K562 (cell line): ENCODE measurements at regions of chr11 and their contacts with region 1.

Region 1: GRCh38 chr11:35617687-35618496 is at the start of gene FJX1:
- DNase-seq: peak; percentile 63 to 81 (median 78)
- ATAC-seq: peak; percentile 71
- H3K4me3 ChIP-seq: peak within 1 kb of the TSS; percentile 35
- H3K27ac ChIP-seq: no peak within 1 kb of the TSS
- H3K4me1 ChIP-seq: peaks cover 0 to 24% of the 10 kb centered on the region in 2 experiments; a peak in 4 of 5 replicates
- H3K27me3 ChIP-seq: peaks cover 21 to 30% of the 10 kb centered on the region in 2 experiments
- CTCF ChIP-seq: no peak
- EP300 ChIP-seq: no peak
- POLR2A ChIP-seq: no peak
- RAD21 ChIP-seq: no peak
- polyA plus RNA-seq, gene FJX1: 0.10 to 0.38 TPM

Region 2: DNA sequence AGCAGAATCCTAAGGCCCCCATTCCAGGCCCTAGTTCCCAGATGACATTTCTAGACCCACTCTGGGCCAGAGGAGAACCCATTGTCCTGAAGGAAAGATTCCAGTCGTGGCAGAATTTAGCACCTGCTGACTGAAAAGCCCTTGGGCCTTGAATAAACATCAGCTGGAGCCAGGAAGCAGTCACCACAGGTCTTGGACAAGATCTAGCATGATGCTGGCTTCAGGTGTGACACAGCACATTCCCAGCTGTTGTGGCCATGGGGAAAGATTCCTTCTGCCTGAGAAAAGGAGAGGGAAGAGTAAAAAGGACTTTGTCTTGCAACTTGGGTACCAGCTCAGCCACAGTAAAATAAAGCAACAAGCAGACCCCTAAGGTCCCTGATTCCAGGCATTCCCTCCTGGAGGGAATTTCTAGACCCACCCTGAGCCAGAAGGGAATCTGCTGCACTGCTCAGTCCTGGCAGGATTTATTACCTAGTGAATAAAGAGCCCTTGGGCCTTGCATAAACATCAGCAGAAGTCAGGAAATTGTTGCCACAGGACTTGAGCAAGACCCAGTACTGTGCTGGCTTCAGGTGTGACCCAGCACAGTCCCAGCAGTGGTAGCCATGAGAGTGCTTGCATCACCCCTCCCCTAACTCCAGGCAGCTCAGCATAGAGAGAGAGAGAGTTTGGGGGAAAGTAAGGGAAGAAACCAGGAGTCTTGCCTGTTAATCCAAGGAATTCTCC is 50.0 kb before region 1 on chr11:
- CTCF ChIA-PET with region 1: no interaction called
- POLR2A ChIA-PET with region 1: no interaction called
- in situ Hi-C with region 1: no loop called
- intact Hi-C with region 1: no loop called
- DNase-seq: no peak
- ATAC-seq: no peak
- H3K4me3 ChIP-seq: no peak overlapping the region
- H3K27ac ChIP-seq: no peak overlapping the region
- H3K4me1 ChIP-seq: no peaks in the 10 kb centered on the region
- H3K27me3 ChIP-seq: peaks cover 0 to 4% of the 10 kb centered on the region in 2 experiments; a peak in 1 of 5 replicates
- CTCF ChIP-seq: no peak
- EP300 ChIP-seq: no peak
- POLR2A ChIP-seq: no peak
- RAD21 ChIP-seq: no peak

Region 3: GRCh38 chr11:36015799-36016198 is 397.9 kb after region 1 on chr11:
- CTCF ChIA-PET with region 1: no interaction called
- POLR2A ChIA-PET with region 1: no interaction called
- in situ Hi-C with region 1: no loop called
- intact Hi-C with region 1: loop called (anchors 5 kb)
- DNase-seq: no peak
- ATAC-seq: no peak
- H3K4me3 ChIP-seq: no peak overlapping the region
- H3K27ac ChIP-seq: no peak overlapping the region
- H3K4me1 ChIP-seq: no peaks in the 10 kb centered on the region
- H3K27me3 ChIP-seq: peaks cover 5 to 23% of the 10 kb centered on the region in 2 experiments; a peak in 3 of 5 replicates
- CTCF ChIP-seq: no peak
- EP300 ChIP-seq: no peak
- POLR2A ChIP-seq: no peak
- RAD21 ChIP-seq: no peak

Region 4: DNA sequence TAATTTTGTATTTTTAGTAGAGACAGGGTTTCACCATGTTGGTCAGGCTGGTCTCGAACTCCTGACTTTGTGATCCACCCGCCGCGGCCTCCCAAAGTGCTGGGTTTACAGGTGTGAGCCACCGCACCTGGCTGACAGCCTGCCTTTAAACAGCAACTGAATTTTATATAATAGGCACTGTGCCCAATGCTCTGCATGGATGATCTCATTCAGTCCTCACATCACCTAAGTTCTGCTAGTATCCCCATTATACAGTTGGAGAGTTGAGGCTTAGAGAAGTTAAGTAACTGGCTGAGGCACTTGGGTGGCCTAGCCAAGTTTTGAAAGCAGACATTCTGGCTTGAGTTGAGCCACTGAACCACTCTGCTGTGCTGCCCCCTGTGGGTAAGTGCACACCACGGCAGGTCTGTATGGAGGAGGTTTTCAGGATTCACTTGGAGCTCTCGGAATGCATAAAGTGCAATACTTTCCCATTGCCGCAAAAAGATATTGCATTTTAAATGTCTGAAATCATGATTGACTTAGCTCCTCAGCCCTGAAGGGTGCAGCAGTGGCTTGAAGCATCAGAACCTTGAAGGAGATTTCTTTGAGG is 438.4 kb after region 1 on chr11:
- CTCF ChIA-PET with region 1: no interaction called
- POLR2A ChIA-PET with region 1: no interaction called
- in situ Hi-C with region 1: no loop called
- intact Hi-C with region 1: loop called (anchors 1 kb)
- DNase-seq: peak; percentile 47 to 66 (median 62)
- ATAC-seq: peak; percentile 94
- H3K4me3 ChIP-seq: no peak overlapping the region
- H3K27ac ChIP-seq: no peak overlapping the region
- H3K4me1 ChIP-seq: peaks cover 0 to 6% of the 10 kb centered on the region in 2 experiments; a peak in 1 of 5 replicates
- H3K27me3 ChIP-seq: no peaks in the 10 kb centered on the region; a peak in 1 of 5 replicates
- CTCF ChIP-seq: peak; percentile 62 to 75 (median 65)
- EP300 ChIP-seq: no peak
- POLR2A ChIP-seq: no peak
- RAD21 ChIP-seq: peak; percentile 53 to 69

Region 5: GRCh38 chr11:36149538-36150242 is 531.8 kb after region 1 on chr11:
- CTCF ChIA-PET with region 1: interaction called, 3 read pairs
- POLR2A ChIA-PET with region 1: interaction called, 3 read pairs
- in situ Hi-C with region 1: no loop called
- intact Hi-C with region 1: loop called (anchors 1 kb)
- DNase-seq: peak; percentile 84 to 90 (median 88)
- ATAC-seq: peak; percentile 98
- H3K4me3 ChIP-seq: no peak overlapping the region
- H3K27ac ChIP-seq: peak overlapping the region; percentile 82; the same call in 2 of the 3 replicates
- H3K4me1 ChIP-seq: peaks cover 12 to 18% of the 10 kb centered on the region in 2 experiments
- H3K27me3 ChIP-seq: no peaks in the 10 kb centered on the region
- CTCF ChIP-seq: peak; percentile 75 to 92 (median 88)
- EP300 ChIP-seq: peak; percentile 93
- POLR2A ChIP-seq: no peak
- RAD21 ChIP-seq: peak; percentile 88 to 94

Region 6: DNA sequence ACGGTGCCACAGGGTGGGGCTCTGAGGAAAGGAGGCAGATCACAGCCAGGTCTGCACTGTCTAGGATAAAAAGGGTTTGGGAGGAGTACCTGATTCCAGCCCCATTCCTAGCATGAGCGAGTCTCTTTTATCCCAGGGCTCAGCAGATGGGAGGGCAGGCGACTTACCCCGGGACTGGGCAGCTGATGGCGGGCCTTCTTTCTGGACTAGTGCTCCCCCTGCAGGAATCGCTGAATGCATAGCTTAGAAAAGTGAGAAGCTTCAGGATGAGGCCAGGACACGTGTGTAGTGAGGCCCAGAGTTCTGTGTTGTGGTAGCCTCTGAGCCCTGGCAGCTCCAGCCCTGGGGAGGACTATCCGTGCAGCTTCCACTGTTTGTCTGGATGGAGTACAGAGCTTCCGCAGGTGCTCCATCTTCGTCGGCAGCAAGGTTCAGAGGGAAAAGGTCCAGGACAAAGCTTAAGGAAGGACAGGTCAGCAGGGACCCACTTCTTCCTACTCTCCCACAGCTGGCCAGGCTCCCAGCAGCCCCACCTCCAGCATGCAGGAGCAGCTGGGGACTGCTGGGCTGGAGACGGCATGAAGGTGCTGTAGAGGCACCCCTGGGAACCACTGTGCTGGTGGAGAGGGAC is 641.0 kb after region 1 on chr11:
- CTCF ChIA-PET with region 1: interaction called, 5 read pairs
- POLR2A ChIA-PET with region 1: no interaction called
- in situ Hi-C with region 1: no loop called
- intact Hi-C with region 1: loop called (anchors 2 kb)
- DNase-seq: peak; percentile 25 to 64 (median 42)
- ATAC-seq: peak; percentile 96
- H3K4me3 ChIP-seq: no peak overlapping the region
- H3K27ac ChIP-seq: no peak overlapping the region
- H3K4me1 ChIP-seq: no peaks in the 10 kb centered on the region
- H3K27me3 ChIP-seq: peaks cover 5 to 22% of the 10 kb centered on the region in 2 experiments; a peak in 4 of 5 replicates
- CTCF ChIP-seq: peak; percentile 61 to 79 (median 75)
- EP300 ChIP-seq: no peak
- POLR2A ChIP-seq: no peak
- RAD21 ChIP-seq: peak; percentile 86 to 87